Astrocyte of the cerebellum (primary cell): ENCODE measurements at regions of chr5 and their contacts with region 1.

Region 1: GRCh38 chr5:926417-927171 is 33.9 kb downstream of the TRIP13 start:
- DNase-seq: no peak
- H3K4me3 ChIP-seq: peak overlapping the region; percentile 18
- CTCF ChIP-seq: peak; percentile 36

Region 2: DNA sequence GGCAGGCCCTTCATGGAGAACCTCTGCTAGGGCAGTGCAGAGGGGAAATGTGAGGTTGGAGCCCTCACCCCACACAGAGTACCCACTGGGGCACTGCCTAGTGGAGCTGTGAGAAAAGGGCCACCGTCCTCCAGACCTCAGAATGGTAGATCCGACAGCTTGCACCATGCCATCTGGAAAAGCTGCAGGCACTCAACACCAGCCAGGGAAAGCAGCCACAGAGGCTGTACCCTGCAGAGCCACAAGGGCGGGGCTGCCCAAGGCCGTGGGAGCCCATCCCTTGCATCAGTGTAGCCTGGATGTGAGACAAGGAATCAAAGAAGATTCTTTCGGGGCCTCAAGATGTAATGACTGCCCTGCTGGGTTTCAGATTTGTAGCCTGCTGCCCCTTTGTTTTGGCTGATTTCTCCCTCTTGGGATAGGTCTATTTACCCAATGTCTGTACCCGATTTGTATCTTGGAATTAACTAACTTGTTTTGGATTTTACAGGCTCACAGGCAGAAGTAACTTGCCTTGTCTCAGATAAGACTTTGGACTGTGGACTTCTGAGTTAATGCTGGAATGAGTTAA is 59.2 kb before region 1 on chr5:
- in situ Hi-C with region 1: no loop called
- DNase-seq: no peak
- H3K4me3 ChIP-seq: no peak overlapping the region
- CTCF ChIP-seq: no peak

Region 3: GRCh38 chr5:1167728-1168709 is 241.4 kb after region 1 on chr5:
- in situ Hi-C with region 1: loop called (anchors 25 kb)
- DNase-seq: peak; percentile 12
- H3K4me3 ChIP-seq: no peak overlapping the region
- CTCF ChIP-seq: peak; percentile 82